ENCODE measurements at regions of chr6 and their contacts with region 1.

Region 1: DNA sequence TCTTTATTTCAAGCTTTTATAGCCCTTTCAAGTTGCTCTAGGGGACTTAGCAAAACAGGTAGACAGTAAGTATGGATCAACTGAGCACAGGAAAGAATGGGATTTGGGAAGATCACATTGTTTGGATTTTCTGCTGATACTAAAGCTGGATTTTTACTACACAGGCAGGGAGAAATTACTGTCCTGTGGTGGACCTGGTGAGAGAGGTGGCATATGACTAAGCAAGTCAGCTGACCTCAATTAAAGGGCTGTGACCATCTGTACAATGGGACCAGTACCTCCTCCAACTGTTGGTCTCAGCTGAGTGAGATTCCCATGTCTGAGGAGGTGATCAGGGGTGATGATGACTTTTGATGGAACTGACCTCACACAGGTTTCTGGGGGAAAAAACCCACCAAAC is 28.0 kb downstream of the RREB1 start:
- DNase-seq: no peak
- ATAC-seq: peak; percentile 64
- H3K4me3 ChIP-seq: peak overlapping the region; percentile 41
- H3K27ac ChIP-seq: peak overlapping the region; percentile 88
- H3K4me1 ChIP-seq: peaks cover 77% of the 10 kb centered on the region
- H3K27me3 ChIP-seq: no peaks in the 10 kb centered on the region
- CTCF ChIP-seq: no peak
- EP300 ChIP-seq: 0 out of 4 replicates have a peak, but pooled peaks of 1 of the 2 experiments have one; percentile 18
- POLR2A ChIP-seq: no peak
- RAD21 ChIP-seq: no peak

Region 2: GRCh38 chr6:6654599-6655575 is 480.9 kb before region 1 on chr6:
- CTCF ChIA-PET with region 1: no interaction called
- POLR2A ChIA-PET with region 1: no interaction called
- RAD21 ChIA-PET with region 1: no interaction called
- SMC1A ChIA-PET with region 1: no interaction called
- in situ Hi-C with region 1: no loop called
- intact Hi-C with region 1: no loop called
- DNase-seq: no peak
- ATAC-seq: no peak
- H3K4me3 ChIP-seq: no peak overlapping the region
- H3K27ac ChIP-seq: peak overlapping the region; percentile 41
- H3K4me1 ChIP-seq: peaks cover 42% of the 10 kb centered on the region
- H3K27me3 ChIP-seq: no peaks in the 10 kb centered on the region
- CTCF ChIP-seq: no peak
- EP300 ChIP-seq: no peak
- POLR2A ChIP-seq: no peak
- RAD21 ChIP-seq: no peak

Region 3: GRCh38 chr6:7124636-7125035 is 11.1 kb before region 1 on chr6:
- CTCF ChIA-PET with region 1: interaction called, 5 read pairs
- POLR2A ChIA-PET with region 1: interaction called, 4 read pairs
- RAD21 ChIA-PET with region 1: no interaction called
- SMC1A ChIA-PET with region 1: interaction called, 11 read pairs
- in situ Hi-C with region 1: no loop called
- intact Hi-C with region 1: no loop called
- DNase-seq: no peak
- ATAC-seq: no peak
- H3K4me3 ChIP-seq: no peak overlapping the region
- H3K27ac ChIP-seq: no peak overlapping the region
- H3K4me1 ChIP-seq: peaks cover 24% of the 10 kb centered on the region
- H3K27me3 ChIP-seq: no peaks in the 10 kb centered on the region
- CTCF ChIP-seq: no peak
- EP300 ChIP-seq: no peak
- POLR2A ChIP-seq: no peak
- RAD21 ChIP-seq: no peak

Region 4: DNA sequence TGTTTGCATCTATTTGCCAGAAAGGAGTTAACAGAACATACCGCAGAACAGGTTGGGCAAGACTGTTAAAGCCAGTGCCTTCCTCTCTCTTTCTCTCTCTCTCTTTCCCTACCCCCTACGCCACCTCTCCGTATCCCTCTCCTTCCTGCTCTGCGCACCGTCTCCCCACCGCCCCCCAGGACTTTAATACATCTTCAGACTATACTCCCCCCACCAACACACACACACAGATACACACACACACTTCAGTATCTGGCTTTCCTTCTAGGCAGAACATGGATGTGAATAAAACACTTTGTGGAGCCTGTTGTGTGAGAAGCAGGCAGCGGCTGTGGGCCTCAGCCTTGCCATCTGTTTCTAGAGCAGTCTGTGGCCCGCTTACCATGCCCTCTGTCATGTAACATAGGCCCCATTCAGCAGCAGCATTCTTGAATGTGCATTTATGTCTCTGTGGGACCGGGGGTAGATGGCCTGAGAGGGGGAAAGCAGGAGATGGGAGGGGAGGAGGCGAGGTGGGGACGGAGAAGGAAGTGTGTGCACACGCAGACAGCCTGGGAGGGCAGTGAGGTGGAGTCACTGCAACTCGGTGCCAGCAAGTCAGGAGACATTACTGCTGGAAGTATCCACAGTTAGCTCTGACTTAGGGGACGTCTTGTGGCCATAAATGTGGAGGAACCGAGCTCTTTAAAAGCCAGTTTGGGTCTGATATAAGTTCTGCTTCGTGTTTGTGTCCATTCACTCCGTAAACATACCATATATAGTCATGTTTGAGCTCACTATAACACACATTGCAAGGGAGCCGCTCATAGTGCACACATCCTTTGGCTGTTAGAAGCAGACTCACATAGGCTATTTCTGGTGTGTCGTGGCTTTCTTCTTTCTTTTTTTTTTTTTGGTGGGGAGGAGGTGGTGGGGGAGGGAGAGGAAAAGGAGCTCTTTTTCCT is 10.4 kb after region 1 on chr6:
- CTCF ChIA-PET with region 1: interaction called, 63 read pairs
- POLR2A ChIA-PET with region 1: interaction called, 17 read pairs
- RAD21 ChIA-PET with region 1: interaction called, 22 read pairs
- SMC1A ChIA-PET with region 1: interaction called, 256 read pairs
- in situ Hi-C with region 1: no loop called
- intact Hi-C with region 1: no loop called
- DNase-seq: no peak
- ATAC-seq: peak; percentile 75
- H3K4me3 ChIP-seq: peak overlapping the region; percentile 63
- H3K27ac ChIP-seq: peak overlapping the region; percentile 96
- H3K4me1 ChIP-seq: peaks cover 67% of the 10 kb centered on the region
- H3K27me3 ChIP-seq: no peaks in the 10 kb centered on the region
- CTCF ChIP-seq: no peak
- EP300 ChIP-seq: no peak
- POLR2A ChIP-seq: peak; percentile 68
- RAD21 ChIP-seq: no peak